Head of caudate nucleus (tissue), 42 donors: ENCODE measurements at regions of chr3 and their contacts with region 1.

Region 1: DNA sequence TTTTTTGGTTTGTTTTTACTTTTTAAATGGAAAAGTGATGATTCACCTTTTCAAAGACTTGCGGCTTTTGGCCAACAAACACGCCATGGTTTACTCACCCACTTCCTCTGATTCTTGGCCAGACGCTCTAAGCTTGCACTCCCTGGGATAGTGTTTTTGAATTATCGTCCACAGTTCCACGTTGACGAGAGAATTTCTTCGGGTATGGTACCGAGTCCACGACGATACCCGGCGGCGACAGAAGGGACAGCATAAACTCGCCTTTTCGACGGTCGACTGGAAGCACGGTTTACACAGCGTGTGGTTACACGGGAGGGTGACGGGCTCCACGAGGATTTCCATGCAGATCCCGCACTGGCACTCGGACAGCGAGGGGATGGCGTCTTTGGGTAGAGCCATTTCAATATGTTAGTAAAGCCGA is 783 bp downstream of the RNF168 start:
- DNase-seq: peak in 38 of 42 donors; percentile 13 to 66 (median 37)

Region 2: GRCh38 chr3:196219194-196219978 is 283.4 kb before region 1 on chr3:
- intact Hi-C with region 1: no loop called
- DNase-seq: peak in 41 of 42 donors; percentile 26 to 84 (median 62)

Region 3: GRCh38 chr3:196251918-196252317 is 250.9 kb before region 1 on chr3:
- intact Hi-C with region 1: loop called (anchors 10 kb)
- DNase-seq: no peak

Region 4: GRCh38 chr3:196317687-196318467 is 184.9 kb before region 1 on chr3 and contains the start of gene DYNLT2B:
- intact Hi-C with region 1: loop called (anchors 5 kb)
- DNase-seq: peak; percentile 65 to 95 (median 89)

Region 5: DNA sequence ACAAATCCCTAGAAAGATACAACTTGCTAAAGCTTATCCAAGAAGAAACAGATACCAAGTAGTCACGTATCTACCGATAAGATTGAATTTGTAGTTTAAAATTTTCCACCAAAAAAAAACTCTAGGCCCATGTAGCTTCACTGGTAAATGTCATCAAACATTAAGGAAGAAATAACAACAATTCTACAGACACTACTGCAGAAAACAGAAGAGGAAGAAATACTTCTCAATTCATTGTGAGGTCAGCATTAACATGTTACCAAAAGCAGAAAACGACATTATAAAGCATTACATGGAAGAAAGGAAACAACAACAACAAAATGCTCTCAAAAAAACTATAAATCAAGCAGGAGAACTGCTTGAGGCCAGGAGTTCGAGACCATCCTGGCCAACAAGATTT is 137.0 kb before region 1 on chr3:
- intact Hi-C with region 1: no loop called
- DNase-seq: no peak

Region 6: GRCh38 chr3:196432137-196432879 is 70.5 kb before region 1 on chr3 and contains the start of gene UBXN7:
- intact Hi-C with region 1: loop called (anchors 5 kb)
- DNase-seq: peak; percentile 82 to 98 (median 95)